Activated CD4-positive, alpha-beta T cell treated with anti-CD3 and anti-CD28 coated beads, Interleukin-2, amount 10 ng/mL, durations not matched to agents 24 days and 14 days (primary cell): ENCODE measurements at regions of chr15 and their contacts with region 1.

Region 1: DNA sequence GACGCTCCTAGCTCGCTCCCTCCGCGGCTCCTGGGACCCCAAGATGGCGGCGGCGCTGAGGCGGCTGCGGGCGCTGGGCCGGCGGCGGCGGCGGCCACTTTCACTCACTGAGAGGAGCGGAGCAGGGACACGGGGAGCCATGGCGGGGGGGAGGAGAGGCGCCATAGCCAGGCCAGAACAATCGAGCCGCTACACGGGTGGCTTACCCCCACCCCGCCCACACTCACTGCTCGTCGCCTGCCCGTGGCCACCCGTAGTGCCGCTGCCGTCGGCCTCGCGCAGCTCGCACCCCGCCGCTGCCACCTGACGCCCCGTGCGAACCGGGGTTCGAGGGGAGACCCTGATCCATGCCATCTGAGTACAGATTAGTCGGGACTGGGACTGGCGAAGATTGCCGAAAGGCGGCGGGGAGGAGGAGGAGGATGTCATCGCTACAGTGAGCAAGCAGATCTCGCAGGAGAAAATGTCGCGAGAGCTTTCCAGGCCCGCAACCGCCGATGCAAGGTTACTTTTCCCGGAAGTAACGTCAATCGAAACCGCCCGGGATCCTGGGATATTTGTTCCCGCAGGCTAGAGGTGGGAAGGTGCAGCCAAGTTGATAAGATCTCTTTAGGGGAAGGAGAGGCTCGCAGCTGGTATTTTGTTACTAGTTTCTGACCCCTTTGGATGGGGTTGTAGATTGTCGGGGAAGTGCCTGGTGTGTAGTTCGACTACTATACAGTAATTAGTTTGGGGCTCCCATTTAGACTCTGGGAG is at the start of gene INO80:
- DNase-seq: peak; percentile 99
- H3K4me3 Mint-ChIP-seq: peak within 1 kb of the TSS; percentile 91
- H3K27ac Mint-ChIP-seq: peak within 1 kb of the TSS; percentile 99
- H3K4me1 Mint-ChIP-seq: peaks cover 17% of the 10 kb centered on the region
- H3K27me3 Mint-ChIP-seq: peaks cover 2% of the 10 kb centered on the region
- total RNA-seq, gene INO80: 33.1 and 37.2 TPM in 2 replicates

Region 2: GRCh38 chr15:40906091-40906990 is 210.0 kb before region 1 on chr15:
- intact Hi-C with region 1: loop called (anchors 10 kb)
- DNase-seq: peak; percentile 90
- H3K4me3 Mint-ChIP-seq: peak overlapping the region; percentile 68
- H3K27ac Mint-ChIP-seq: peak overlapping the region; percentile 59
- H3K4me1 Mint-ChIP-seq: peaks cover 24% of the 10 kb centered on the region
- H3K27me3 Mint-ChIP-seq: no peaks in the 10 kb centered on the region

Region 3: GRCh38 chr15:41150279-41150678 is 34.0 kb after region 1 on chr15:
- intact Hi-C with region 1: loop called (anchors 2 kb)
- DNase-seq: no peak
- H3K4me3 Mint-ChIP-seq: peak overlapping the region; percentile 49
- H3K27ac Mint-ChIP-seq: no peak overlapping the region
- H3K4me1 Mint-ChIP-seq: peaks cover 19% of the 10 kb centered on the region
- H3K27me3 Mint-ChIP-seq: peaks cover 4% of the 10 kb centered on the region

Region 4: DNA sequence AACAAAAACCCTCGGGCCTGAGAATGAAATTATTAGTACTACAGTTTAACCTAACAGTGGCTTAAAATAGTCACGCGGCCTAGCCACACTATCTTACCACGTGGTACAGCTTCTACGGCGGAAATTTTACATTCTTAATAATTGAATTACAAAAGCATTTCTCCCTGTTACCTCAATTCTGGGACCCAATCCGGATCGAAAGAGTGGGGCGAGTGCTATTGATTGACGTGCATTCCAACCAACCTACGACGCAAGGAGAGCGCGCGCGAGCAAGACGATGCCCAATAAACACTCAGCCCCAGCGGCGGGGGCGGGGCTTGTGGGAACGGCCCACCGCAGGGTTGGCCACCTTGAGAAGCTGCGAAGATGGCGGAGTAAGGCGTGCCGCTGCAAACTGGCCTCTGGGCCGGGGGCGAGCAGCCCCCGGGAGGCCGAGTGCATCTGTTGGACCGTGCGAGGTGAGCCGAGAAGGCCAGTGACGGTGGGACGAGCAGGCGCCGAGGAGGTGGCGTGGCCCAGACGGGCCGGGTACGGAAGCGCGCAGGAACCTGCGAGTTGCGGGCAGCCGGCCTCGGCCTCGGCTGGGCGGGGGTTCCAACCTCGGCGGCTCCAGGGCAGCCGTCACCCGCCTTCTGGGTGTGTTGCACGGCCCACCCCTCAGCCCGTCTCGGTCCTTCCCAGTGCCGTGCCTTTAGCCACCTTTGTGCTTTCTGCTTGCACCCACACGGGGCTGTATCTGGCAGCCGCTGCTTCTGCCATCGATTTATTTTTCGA is 167.5 kb after region 1 on chr15:
- intact Hi-C with region 1: loop called (anchors 1 kb)
- DNase-seq: peak; percentile 99
- H3K4me3 Mint-ChIP-seq: peak overlapping the region; percentile 99
- H3K27ac Mint-ChIP-seq: peak overlapping the region; percentile 98
- H3K4me1 Mint-ChIP-seq: peaks cover 45% of the 10 kb centered on the region
- H3K27me3 Mint-ChIP-seq: no peaks in the 10 kb centered on the region

Region 5: GRCh38 chr15:41660235-41661077 is 544.2 kb after region 1 on chr15 and contains the start of gene MGA:
- intact Hi-C with region 1: no loop called
- DNase-seq: peak; percentile 97
- H3K4me3 Mint-ChIP-seq: peak within 1 kb of the TSS; percentile 88
- H3K27ac Mint-ChIP-seq: peak within 1 kb of the TSS; percentile 89
- H3K4me1 Mint-ChIP-seq: peaks cover 30% of the 10 kb centered on the region
- H3K27me3 Mint-ChIP-seq: peaks cover 18% of the 10 kb centered on the region
- total RNA-seq, gene MGA: 36.0 and 37.7 TPM in 2 replicates

Region 6: DNA sequence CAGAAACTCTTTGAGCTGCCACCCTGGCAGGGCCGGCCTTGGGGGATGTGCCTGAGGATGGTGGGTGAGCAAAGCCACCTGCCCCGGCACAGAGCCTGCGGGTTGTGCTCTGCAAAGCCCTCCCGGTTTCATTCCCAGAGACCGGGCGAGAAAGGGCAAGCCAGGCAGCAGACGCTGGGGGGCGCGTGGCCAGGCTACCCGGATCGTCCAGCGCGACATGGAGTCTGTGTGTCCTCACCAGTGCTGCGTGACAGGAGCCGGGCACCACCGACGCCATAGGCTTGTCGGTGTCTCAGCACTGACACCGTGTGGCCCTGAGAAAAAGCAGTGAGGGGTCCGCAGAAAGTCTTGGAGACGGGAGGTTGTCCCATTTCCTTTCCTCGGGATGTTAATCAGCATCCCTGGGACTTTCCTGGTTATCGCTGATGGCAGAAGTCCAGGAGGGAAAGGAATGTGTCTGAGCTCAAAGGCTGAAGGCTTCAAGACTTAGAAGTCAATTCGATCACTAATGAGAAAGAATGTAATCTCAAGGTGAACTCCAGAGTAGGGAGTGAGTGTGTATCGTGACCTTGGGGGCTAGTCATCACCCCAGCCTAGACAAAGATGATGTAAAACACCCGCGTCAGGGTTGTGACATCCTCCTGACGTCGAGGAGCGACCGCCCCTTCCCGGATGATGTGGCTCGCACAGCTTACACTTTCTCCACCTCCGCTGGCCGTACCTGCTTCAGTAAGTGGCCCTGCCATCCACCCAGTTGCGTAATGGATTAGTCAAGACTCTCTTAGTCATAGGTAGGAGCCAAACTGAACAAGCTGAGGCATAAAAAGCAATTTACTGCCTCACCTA is 940.9 kb after region 1 on chr15:
- intact Hi-C with region 1: no loop called
- DNase-seq: peak; percentile 82
- H3K4me3 Mint-ChIP-seq: peak overlapping the region; percentile 51
- H3K27ac Mint-ChIP-seq: peak overlapping the region; percentile 37
- H3K4me1 Mint-ChIP-seq: peaks cover 11% of the 10 kb centered on the region
- H3K27me3 Mint-ChIP-seq: peaks cover 44% of the 10 kb centered on the region